ENCODE measurements at regions of chr13 and their contacts with region 1.

Region 1: GRCh38 chr13:95128045-95128643 is 173.1 kb downstream of the ABCC4 start:
- DNase-seq: peak; percentile 83
- ATAC-seq: peak; percentile 88
- H3K4me3 ChIP-seq: peak overlapping the region; percentile 53
- H3K27ac ChIP-seq: peak overlapping the region; percentile 98
- H3K4me1 ChIP-seq: peaks cover 45% of the 10 kb centered on the region
- H3K27me3 ChIP-seq: no peaks in the 10 kb centered on the region
- CTCF ChIP-seq: no peak

Region 2: DNA sequence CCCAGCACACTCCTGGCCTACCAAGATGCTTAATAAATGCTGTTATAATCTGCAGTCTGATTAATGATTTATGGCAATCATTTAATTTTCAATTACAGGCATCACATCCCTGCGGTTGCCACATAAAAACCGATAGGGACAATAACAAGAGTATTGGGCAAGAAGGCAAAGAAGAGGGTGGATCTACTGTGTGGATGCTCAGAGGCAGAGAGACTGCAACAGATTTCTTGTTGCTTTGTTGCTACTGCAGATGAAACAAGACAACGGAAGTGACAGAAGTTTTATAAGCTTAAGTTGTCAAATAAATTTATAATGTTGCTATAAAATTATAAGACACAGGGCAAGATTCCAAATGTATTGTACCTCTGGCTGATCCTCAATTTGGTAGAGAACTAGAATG is 18.3 kb after region 1 on chr13:
- CTCF ChIA-PET with region 1: no interaction called
- POLR2A ChIA-PET with region 1: no interaction called
- intact Hi-C with region 1: loop called (anchors 2 kb)
- DNase-seq: no peak
- ATAC-seq: peak; percentile 62
- H3K4me3 ChIP-seq: no peak overlapping the region
- H3K27ac ChIP-seq: no peak overlapping the region
- H3K4me1 ChIP-seq: peaks cover 12% of the 10 kb centered on the region
- H3K27me3 ChIP-seq: no peaks in the 10 kb centered on the region
- CTCF ChIP-seq: no peak